Right ventricle myocardium superior (tissue), 1 donor: ENCODE measurements at regions of chr22 and their contacts with region 1.

Region 1: DNA sequence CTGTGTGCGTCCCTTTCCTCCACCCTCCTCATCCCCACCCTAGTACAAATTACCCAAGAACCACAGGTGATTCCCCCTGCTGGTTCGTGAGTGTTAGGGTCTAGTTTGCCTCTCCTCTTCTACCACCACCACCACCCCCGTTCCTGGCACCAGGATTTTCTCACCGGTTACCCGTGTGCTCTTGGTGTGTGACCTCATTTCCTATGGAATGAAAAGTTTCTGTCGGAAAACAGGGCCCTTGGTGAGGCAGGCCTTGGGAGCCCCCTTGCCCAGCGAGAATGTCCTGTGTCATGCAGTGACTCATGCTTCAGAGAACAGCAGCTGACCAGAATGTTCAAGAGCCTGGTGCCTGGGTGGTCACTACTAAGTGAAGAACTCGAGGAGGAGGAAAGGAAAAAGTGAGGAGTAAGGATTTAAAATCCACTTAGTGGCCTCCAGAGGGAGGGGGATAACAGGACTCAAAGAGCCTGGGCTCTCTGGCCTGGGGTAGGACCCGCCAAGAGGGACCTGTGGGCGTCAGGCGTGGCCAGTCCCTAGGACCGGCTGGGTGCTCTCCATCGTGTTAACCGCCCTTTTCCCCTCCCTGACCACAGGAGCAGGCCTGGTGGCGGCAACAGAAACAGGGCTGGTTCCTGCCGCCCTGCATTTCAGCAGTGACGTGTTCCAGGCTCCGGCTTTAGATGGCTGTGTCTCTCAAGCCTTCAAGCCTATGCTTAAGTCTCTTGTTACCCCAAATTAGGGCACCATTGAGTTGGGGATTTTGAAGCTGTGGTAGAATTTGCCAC is 30.2 kb downstream of the C22orf31 start:
- DNase-seq: peak; percentile 45
- ATAC-seq: peak; percentile 76

Region 2: GRCh38 chr22:28882878-28883656 is 148.4 kb before region 1 on chr22 and contains the start of gene ZNRF3:
- intact Hi-C with region 1: loop called (anchors 10 kb)
- DNase-seq: peak; percentile 94
- ATAC-seq: peak; percentile 98
- total RNA-seq, gene ZNRF3: 5.0 TPM

Region 3: GRCh38 chr22:28917747-28918549 is 113.5 kb before region 1 on chr22:
- intact Hi-C with region 1: loop called (anchors 5 kb)
- DNase-seq: peak; percentile 49
- ATAC-seq: peak; percentile 84

Region 4: DNA sequence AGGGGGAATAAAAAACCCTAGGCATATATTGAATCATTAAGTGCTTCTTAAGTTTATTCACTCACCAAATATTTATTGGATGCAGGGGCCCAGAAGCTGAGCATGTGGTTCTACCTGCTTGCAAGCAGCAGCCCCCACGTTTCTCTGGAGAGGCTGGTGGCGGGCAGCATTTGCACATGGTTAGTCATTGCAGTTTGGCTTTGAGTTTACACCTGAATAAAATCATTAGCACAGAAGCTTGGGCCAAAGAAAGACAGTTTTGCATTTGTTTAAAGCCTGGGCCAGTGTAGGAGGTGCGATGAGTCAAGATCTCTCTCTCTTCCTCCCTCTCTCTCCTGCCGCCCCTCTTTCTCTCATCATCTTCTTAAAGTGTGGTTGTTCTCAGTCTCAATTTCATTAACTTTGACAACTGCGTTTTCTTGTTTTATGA is 42.4 kb before region 1 on chr22:
- intact Hi-C with region 1: no loop called
- DNase-seq: no peak
- ATAC-seq: no peak

Region 5: DNA sequence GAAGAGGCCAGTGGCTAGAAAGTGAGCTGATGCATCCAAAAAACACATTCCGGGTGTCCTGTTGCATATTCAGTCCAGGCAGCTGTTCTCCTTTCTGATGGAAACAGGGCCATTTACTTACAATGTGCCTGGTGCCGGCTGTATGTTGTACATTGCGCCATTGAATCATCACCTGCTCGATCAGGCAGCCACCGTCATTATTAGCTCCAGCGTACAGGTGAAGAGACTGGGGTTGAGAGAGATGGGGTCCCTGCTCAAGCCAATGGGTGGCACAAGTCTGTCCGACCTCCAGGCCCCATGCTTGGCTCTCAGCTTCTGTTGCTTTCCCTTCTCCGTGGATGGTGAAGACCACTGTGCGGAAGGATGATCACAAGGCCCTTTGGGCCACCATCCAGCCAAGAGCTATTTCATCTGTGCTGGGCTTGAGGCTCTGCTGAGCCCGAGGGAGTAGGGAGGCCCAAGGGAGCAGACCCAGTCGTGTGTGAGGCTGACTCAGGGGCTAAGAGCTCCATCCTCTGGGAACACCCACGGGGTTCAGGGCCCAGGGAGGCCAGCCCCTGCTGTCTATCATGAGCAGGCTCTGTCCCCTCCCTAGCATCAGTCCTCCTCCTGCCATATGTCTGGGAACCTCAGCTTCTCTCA is 153.6 kb after region 1 on chr22:
- intact Hi-C with region 1: no loop called
- DNase-seq: no peak
- ATAC-seq: no peak

Region 6: DNA sequence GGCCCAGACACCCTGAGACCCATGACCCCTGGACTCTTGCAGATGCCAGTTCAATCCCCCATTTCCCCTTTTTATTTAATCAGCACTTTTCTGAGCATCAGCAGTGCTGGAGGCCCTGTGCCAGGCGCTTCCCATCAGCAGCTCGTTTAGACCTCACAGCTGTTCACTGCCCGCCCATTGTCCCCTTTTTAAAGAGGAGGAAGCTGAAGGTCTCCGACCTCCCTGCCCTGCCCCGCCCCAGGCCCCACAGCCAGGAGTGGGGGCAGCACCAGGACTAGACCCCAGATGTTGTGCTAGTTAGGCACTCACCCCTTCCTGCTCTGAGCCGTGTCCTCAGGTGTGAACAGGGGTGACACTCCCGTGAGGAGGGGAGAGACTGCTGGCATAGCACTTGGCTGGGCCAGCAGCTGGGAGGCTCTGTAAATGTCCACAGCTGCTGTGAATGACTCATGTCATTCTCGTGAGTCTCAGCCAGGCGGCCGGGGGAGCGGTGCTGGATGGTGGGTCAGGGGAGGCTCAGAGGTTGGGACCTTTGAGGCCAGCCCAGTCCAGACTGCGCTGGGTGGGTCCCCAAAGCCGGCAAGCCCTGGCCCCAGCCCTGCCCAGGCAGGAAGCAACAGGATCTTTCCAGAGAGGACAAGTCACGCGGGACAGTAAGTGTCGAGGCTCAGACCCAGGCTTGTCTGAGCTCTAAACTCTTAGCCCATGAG is 194.2 kb after region 1 on chr22:
- intact Hi-C with region 1: no loop called
- DNase-seq: peak; percentile 84
- ATAC-seq: peak; percentile 84